Ascending aorta (tissue), 2 donors: ENCODE measurements at regions of chr2 and their contacts with region 1.

Region 1: GRCh38 chr2:203535078-203535783 is at the start of gene RAPH1:
- DNase-seq: peak; percentile 27 to 90
- H3K4me3 ChIP-seq: peak within 1 kb of the TSS; percentile 76 to 95
- H3K27ac ChIP-seq: peak within 1 kb of the TSS; percentile 96 to 98
- H3K4me1 ChIP-seq: peaks cover 0 to 15% of the 10 kb centered on the region in 2 donors
- H3K27me3 ChIP-seq: no peaks in the 10 kb centered on the region
- CTCF ChIP-seq: peak in 1 of 3 experiments; percentile 18
- total RNA-seq, gene RAPH1: 49.8 TPM

Region 2: GRCh38 chr2:203484266-203485112 is 50.7 kb before region 1 on chr2:
- intact Hi-C with region 1: loop called (anchors 5 kb)
- DNase-seq: no peak
- H3K4me3 ChIP-seq: no peak overlapping the region
- H3K27ac ChIP-seq: no peak overlapping the region
- H3K4me1 ChIP-seq: no peaks in the 10 kb centered on the region
- H3K27me3 ChIP-seq: no peaks in the 10 kb centered on the region
- CTCF ChIP-seq: peak; percentile 63 to 73 (median 64)

Region 3: GRCh38 chr2:203498161-203498560 is 37.1 kb before region 1 on chr2:
- intact Hi-C with region 1: loop called (anchors 5 kb)
- DNase-seq: no peak
- H3K4me3 ChIP-seq: no peak overlapping the region
- H3K27ac ChIP-seq: no peak overlapping the region
- H3K4me1 ChIP-seq: no peaks in the 10 kb centered on the region
- H3K27me3 ChIP-seq: no peaks in the 10 kb centered on the region
- CTCF ChIP-seq: no peak

Region 4: GRCh38 chr2:203578759-203579643 is 43.8 kb after region 1 on chr2:
- intact Hi-C with region 1: loop called (anchors 1 kb)
- DNase-seq: peak in 1 of 2 donors; percentile 76
- H3K4me3 ChIP-seq: no peak overlapping the region
- H3K27ac ChIP-seq: peak overlapping the region; percentile 56 to 76
- H3K4me1 ChIP-seq: peaks cover 3 to 21% of the 10 kb centered on the region in 2 donors
- H3K27me3 ChIP-seq: no peaks in the 10 kb centered on the region
- CTCF ChIP-seq: no peak

Region 5: DNA sequence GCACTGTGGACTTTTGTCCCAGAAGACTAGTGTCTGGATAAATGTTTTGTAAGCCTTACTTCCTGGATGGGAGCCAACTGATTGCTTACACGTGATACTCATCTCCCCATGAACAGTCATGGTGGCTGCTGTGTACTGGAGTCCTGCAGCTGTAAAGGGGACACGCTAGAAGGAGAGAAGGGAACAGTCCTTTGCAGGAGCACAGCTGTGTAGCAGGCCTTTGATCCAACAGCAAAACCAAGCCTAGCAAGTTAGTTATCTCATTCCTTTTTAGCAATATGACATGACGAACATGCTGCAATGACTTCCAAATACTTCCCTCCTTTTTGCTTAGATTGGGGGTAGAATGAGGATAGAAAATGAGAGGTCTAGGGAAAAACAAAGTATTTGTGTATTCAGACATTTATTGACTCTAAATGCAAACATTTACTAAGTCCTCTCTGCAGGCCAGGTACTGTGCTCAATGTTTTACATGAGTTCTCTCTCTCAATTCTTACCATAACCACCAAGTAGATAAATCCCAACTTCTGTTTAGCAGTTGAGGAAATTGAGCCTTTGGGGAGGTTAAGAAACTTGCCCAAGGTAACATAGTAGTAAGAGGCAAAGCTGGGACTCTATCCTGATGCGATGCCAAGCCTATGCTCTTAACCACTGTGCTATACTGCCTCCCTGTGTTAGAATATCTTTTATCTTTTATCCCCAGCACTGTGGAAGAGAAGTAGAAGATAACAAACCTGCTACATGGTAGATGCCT is 115.8 kb after region 1 on chr2:
- intact Hi-C with region 1: loop called (anchors 2 kb)
- DNase-seq: no peak
- H3K4me3 ChIP-seq: no peak overlapping the region
- H3K27ac ChIP-seq: peak overlapping the region; percentile 56 to 70
- H3K4me1 ChIP-seq: peaks cover 7 to 16% of the 10 kb centered on the region in 2 donors
- H3K27me3 ChIP-seq: no peaks in the 10 kb centered on the region
- CTCF ChIP-seq: peak; percentile 17 to 46 (median 18)

Region 6: GRCh38 chr2:203683932-203684556 is 148.8 kb after region 1 on chr2:
- intact Hi-C with region 1: loop called (anchors 1 kb)
- DNase-seq: peak in 1 of 2 donors; percentile 74
- H3K4me3 ChIP-seq: no peak overlapping the region
- H3K27ac ChIP-seq: peak overlapping the region; percentile 88 to 96
- H3K4me1 ChIP-seq: peaks cover 18 to 65% of the 10 kb centered on the region in 2 donors
- H3K27me3 ChIP-seq: no peaks in the 10 kb centered on the region
- CTCF ChIP-seq: no peak

Region 7: GRCh38 chr2:203814661-203815540 is 279.7 kb after region 1 on chr2:
- intact Hi-C with region 1: loop called (anchors 2 kb)
- DNase-seq: peak; percentile 26 to 75
- H3K4me3 ChIP-seq: peak overlapping the region in 1 of 2 donors; percentile 38
- H3K27ac ChIP-seq: peak overlapping the region in 1 of 2 donors; percentile 20
- H3K4me1 ChIP-seq: no peaks in the 10 kb centered on the region
- H3K27me3 ChIP-seq: no peaks in the 10 kb centered on the region
- CTCF ChIP-seq: peak; percentile 69 to 89 (median 84)